GM12878 (cell line): ENCODE measurements at regions of chr17 and their contacts with region 1.

Region 1: GRCh38 chr17:69607162-69607834 is 192.8 kb downstream of the MAP2K6 start:
- DNase-seq: peak; percentile 45
- ATAC-seq: peak; percentile 96
- H3K4me3 ChIP-seq: no peak overlapping the region
- H3K27ac ChIP-seq: peak overlapping the region; percentile 50; the same call in 1 of the 2 replicates
- H3K4me1 ChIP-seq: peaks cover 2% of the 10 kb centered on the region; the same call in 1 of the 2 replicates
- H3K27me3 ChIP-seq: no peaks in the 10 kb centered on the region
- CTCF ChIP-seq: peak; percentile 75 to 86 (median 85)
- EP300 ChIP-seq: no peak
- POLR2A ChIP-seq: no peak
- RAD21 ChIP-seq: peak; percentile 82

Region 2: DNA sequence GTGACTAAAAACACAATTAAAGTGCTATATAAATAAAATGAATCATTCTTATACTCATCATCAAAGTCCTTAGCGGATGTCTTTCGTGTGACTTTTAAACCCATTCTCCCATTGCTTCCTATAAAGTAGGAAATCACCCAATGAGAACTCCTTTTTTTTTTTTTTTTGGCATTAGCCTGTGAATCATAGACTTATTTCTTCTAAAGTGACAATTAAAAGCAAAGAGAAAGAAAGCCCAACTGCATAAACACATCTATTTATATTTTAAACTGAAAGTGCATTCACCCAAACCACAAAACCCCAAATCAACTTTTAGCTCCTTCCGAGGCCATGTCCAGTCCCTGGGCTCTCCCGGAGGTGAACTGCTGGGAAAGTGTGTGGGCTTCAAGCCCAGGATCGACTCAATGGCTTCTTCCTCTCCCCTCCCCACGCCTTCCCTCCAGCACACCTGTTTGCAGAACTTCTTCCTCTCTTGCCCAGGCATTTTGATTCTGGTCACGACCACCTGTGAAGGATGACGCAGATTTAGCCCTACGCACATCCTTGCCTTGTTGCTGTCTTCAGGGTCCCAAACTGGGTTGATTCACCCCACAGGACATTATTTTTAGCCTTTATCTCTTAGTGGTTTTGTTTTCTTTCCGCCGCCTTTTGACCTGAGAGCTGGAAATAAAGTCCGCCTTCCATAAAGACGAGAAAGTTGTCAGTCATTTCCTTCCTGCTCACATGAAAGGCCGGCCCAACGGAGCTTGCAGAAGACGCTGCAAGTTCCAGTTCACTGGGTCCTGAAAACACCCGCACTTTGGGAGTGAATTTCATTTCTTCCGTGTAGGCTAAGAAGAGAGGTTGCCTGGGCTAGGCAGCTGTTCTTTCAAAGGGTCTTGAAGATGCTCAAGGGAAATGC is 26.0 kb before region 1 on chr17:
- CTCF ChIA-PET with region 1: interaction called, 12 read pairs
- POLR2A ChIA-PET with region 1: no interaction called
- RAD21 ChIA-PET with region 1: interaction called, 3 read pairs
- SMC1A ChIA-PET with region 1: interaction called, 8 read pairs
- in situ Hi-C with region 1: no loop called
- intact Hi-C with region 1: no loop called
- DNase-seq: peak; percentile 39
- ATAC-seq: peak; percentile 88
- H3K4me3 ChIP-seq: peak overlapping the region; percentile 57; the same call in 1 of the 2 replicates
- H3K27ac ChIP-seq: no peak overlapping the region
- H3K4me1 ChIP-seq: peaks cover 10% of the 10 kb centered on the region
- H3K27me3 ChIP-seq: peaks cover 0 to 6% of the 10 kb centered on the region in 2 experiments; a peak in 1 of 4 replicates
- CTCF ChIP-seq: no peak
- EP300 ChIP-seq: no peak
- POLR2A ChIP-seq: no peak
- RAD21 ChIP-seq: no peak

Region 3: DNA sequence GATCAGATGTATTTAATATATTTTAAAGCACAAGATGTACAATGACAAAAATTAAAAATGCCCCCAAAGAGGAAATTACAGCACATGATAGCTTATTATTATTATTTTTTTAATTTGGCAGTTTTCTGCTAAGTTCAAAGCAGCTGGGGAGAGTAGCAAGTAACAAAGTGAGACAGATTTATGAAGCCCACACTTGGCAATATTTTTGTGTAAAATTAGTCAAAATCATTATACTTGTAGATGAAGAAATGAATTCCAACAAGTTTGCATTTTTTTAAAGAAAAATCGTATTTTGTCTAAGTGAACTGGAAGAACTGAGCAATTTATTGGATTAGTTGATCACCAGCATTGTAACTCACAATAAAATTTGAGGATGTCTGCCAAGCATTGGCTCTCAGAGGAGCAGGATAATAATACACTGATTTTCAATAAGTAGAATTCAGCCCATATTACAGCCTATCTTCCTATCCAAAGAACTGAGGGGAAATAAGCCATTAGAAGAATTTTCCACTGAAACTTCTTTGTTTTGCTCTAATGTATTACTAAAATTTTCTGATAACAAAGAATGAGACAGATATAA is 22.8 kb after region 1 on chr17:
- CTCF ChIA-PET with region 1: no interaction called
- POLR2A ChIA-PET with region 1: no interaction called
- RAD21 ChIA-PET with region 1: no interaction called
- SMC1A ChIA-PET with region 1: no interaction called
- in situ Hi-C with region 1: no loop called
- intact Hi-C with region 1: no loop called
- DNase-seq: no peak
- ATAC-seq: no peak
- H3K4me3 ChIP-seq: no peak overlapping the region
- H3K27ac ChIP-seq: no peak overlapping the region
- H3K4me1 ChIP-seq: no peaks in the 10 kb centered on the region
- H3K27me3 ChIP-seq: no peaks in the 10 kb centered on the region
- CTCF ChIP-seq: no peak
- EP300 ChIP-seq: no peak
- POLR2A ChIP-seq: no peak
- RAD21 ChIP-seq: no peak

Region 4: DNA sequence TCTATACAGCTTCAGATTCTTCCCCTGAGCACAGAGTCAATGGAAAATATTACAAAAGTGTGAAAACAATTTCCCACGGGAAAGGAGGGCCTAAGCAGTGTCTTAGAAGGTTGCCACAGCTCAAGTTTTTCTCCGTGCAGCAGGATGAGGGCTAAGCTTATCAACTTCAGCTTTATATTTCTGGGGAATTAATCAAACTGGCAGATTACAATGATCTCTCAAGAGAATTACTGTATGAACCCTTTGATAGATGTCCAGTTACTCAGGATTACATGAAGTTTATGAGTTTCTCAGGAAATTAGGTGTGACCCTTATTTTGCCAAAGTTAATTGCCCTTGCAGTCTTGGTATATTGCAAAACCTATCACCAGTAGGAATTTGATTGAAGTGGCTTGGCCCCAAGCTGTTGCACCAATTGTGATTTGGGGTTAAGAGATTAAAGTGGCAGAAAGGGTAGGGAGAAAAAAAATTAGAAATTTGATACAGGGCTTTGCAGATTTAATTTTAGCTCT is 105.6 kb after region 1 on chr17:
- CTCF ChIA-PET with region 1: no interaction called
- POLR2A ChIA-PET with region 1: no interaction called
- RAD21 ChIA-PET with region 1: no interaction called
- SMC1A ChIA-PET with region 1: no interaction called
- in situ Hi-C with region 1: no loop called
- intact Hi-C with region 1: no loop called
- DNase-seq: no peak
- ATAC-seq: no peak
- H3K4me3 ChIP-seq: no peak overlapping the region
- H3K27ac ChIP-seq: no peak overlapping the region
- H3K4me1 ChIP-seq: no peaks in the 10 kb centered on the region
- H3K27me3 ChIP-seq: no peaks in the 10 kb centered on the region
- CTCF ChIP-seq: no peak
- EP300 ChIP-seq: no peak
- POLR2A ChIP-seq: no peak
- RAD21 ChIP-seq: no peak

Region 5: DNA sequence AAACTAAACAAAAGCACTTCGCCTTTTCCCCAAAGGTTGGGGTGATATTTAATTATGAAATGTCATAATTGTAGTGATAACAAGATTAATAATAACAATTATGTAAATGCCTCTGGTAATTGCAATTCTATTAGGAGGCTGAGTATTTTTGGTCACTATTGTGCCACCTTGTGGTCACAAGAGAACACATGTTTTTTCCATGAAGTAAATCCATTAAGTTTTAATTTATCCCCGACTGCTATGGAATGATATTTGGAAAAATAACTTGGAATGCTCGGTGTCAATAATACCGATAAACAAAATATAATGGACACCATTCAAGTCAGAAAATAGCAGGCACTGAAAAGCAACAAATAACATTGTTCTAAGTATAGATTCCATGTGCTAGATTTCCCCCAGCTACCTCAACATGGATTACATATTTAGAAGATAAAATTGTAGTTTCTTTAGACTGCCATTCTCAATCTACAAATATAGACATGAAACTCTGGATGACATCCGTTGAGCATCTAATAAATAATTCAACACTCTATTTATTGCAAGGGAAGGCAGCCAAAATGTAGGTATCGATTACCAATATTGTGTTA is 537.1 kb after region 1 on chr17:
- CTCF ChIA-PET with region 1: interaction called, 28 read pairs
- POLR2A ChIA-PET with region 1: no interaction called
- RAD21 ChIA-PET with region 1: interaction called, 21 read pairs
- SMC1A ChIA-PET with region 1: interaction called, 14 read pairs
- in situ Hi-C with region 1: no loop called
- intact Hi-C with region 1: loop called (anchors 1 kb)
- DNase-seq: no peak
- ATAC-seq: no peak
- H3K4me3 ChIP-seq: no peak overlapping the region
- H3K27ac ChIP-seq: no peak overlapping the region
- H3K4me1 ChIP-seq: no peaks in the 10 kb centered on the region
- H3K27me3 ChIP-seq: no peaks in the 10 kb centered on the region
- CTCF ChIP-seq: peak; percentile 44 to 58 (median 45); a peak in 4 of 6 replicates
- EP300 ChIP-seq: no peak
- POLR2A ChIP-seq: no peak
- RAD21 ChIP-seq: peak; percentile 62

Region 6: DNA sequence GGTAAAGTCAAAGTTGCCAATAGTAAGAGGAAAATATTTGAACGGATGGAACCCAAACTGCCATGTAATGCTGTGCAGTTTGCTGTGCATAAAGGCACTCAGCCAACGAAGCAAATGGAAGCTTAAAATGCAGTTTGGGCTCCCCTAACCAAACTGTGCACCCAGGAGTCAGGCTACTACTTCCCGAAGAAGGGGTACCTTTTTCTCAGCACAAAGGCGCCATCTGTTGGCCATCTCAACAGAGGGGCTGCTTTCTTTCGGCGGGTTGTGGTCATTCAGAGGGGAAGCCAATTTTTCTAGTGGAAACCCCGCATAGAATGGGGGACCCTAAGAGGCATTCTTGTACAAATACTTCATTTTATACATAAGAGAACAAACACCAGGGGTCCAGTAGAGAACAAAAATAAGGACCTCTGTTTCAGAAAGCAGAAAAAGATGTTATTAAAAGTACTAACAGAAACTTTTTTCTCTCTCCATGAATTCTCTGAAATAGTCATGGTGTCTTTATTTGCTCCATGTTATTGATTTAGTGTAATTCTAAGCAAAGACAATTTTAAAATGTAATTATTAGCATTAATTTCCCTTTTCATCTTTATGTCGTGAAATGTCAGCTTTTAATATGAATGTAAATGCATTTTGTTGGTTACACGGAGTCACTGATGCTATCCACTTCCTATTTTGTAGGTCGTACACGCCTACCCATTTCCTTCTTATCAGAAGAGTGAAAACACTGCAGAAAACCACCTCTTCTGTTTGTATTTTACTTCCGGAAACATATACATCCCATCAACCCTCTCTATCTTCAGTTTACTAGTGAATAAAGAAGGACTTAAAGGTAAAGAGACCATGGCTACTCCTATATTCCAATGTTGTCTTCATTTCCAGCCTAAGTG is 1015.3 kb after region 1 on chr17:
- CTCF ChIA-PET with region 1: interaction called, 39 read pairs
- POLR2A ChIA-PET with region 1: no interaction called
- RAD21 ChIA-PET with region 1: interaction called, 18 read pairs
- SMC1A ChIA-PET with region 1: interaction called, 11 read pairs
- in situ Hi-C with region 1: no loop called
- intact Hi-C with region 1: loop called (anchors 2 kb)
- DNase-seq: no peak
- ATAC-seq: peak; percentile 85
- H3K4me3 ChIP-seq: no peak overlapping the region
- H3K27ac ChIP-seq: no peak overlapping the region
- H3K4me1 ChIP-seq: no peaks in the 10 kb centered on the region
- H3K27me3 ChIP-seq: no peaks in the 10 kb centered on the region
- CTCF ChIP-seq: peak; percentile 25 to 58 (median 57); a peak in 5 of 6 replicates
- EP300 ChIP-seq: no peak
- POLR2A ChIP-seq: no peak
- RAD21 ChIP-seq: peak; percentile 74